Naive thymus-derived CD4-positive, alpha-beta T cell (primary cell): ENCODE measurements at regions of chr13 and their contacts with region 1.

Region 1: GRCh38 chr13:48492470-48493065 is 40.3 kb downstream of the RCBTB2 start:
- DNase-seq: peak; percentile 38 to 79 (median 74)
- ATAC-seq: peak; percentile 91
- H3K4me3 ChIP-seq: peak overlapping the region; percentile 73
- H3K4me3 Mint-ChIP-seq: no peak overlapping the region
- H3K27ac ChIP-seq: peak overlapping the region; percentile 74
- H3K27ac Mint-ChIP-seq: no peak overlapping the region
- H3K4me1 ChIP-seq: peaks cover 67% of the 10 kb centered on the region in 2 donors
- H3K4me1 Mint-ChIP-seq: peaks cover 1 to 55% (median 34%) of the 10 kb centered on the region in 7 donors
- H3K27me3 ChIP-seq: no peaks in the 10 kb centered on the region
- H3K27me3 Mint-ChIP-seq: no peaks in the 10 kb centered on the region

Region 2: GRCh38 chr13:47420568-47420967 is 1072.0 kb before region 1 on chr13:
- CTCF ChIA-PET with region 1: no interaction called
- POLR2A ChIA-PET with region 1: no interaction called
- intact Hi-C with region 1: no loop called
- DNase-seq: no peak
- ATAC-seq: no peak
- H3K4me3 ChIP-seq: no peak overlapping the region
- H3K4me3 Mint-ChIP-seq: no peak overlapping the region
- H3K27ac ChIP-seq: no peak overlapping the region
- H3K27ac Mint-ChIP-seq: no peak overlapping the region
- H3K4me1 ChIP-seq: no peaks in the 10 kb centered on the region
- H3K4me1 Mint-ChIP-seq: no peaks in the 10 kb centered on the region
- H3K27me3 ChIP-seq: no peaks in the 10 kb centered on the region
- H3K27me3 Mint-ChIP-seq: peaks cover 0 to 9% (median 0%) of the 10 kb centered on the region in 5 donors

Region 3: DNA sequence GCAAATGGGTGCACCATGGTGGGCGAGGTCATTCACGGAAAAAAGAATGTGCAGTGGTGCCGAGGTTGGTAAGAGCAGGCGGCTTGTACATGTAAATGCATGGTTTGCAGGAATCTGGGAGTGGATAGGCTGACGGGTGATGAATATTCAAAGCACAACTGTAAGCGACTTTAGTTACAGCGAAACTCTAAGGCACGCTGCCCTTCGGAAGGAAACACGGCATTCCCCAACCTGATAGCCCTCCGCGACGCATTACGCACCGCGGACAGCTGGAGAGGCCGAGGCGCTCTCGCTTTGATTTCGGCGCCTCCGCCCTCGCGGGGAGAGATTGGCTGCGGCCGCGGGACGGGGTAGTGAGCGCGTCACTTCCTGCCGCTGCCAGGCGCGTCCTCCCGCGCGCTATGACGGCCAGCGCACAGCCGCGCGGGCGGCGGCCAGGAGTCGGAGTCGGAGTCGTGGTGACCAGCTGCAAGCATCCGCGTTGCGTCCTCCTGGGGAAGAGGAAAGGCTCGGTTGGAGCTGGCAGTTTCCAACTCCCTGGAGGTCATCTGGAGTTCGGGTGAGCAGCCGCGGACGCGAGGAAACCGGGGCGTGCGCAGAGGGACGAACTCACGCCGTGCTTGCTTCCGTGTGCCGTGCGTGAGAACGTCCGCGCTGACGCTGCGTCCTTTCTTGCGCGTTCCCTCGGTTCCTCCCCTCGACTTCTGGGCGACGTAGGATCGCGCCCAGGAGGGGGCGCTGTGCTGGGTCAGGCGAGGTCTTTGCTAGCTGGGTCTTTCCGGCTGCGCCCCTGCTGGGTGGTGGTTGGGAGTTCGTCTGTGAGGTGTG is 455.0 kb before region 1 on chr13 and contains the start of gene NUDT15:
- CTCF ChIA-PET with region 1: interaction called, 3 read pairs
- POLR2A ChIA-PET with region 1: interaction called, 7 read pairs
- intact Hi-C with region 1: loop called in 1 of 2 experiments (anchors 10 kb)
- DNase-seq: peak; percentile 93 to 98 (median 97)
- ATAC-seq: peak; percentile 96
- H3K4me3 ChIP-seq: peak within 1 kb of the TSS; percentile 90
- H3K4me3 Mint-ChIP-seq: peak within 1 kb of the TSS; percentile 82 to 98 (median 95)
- H3K27ac ChIP-seq: peak within 1 kb of the TSS; percentile 91
- H3K27ac Mint-ChIP-seq: peak within 1 kb of the TSS; percentile 96 to 100 (median 97)
- H3K4me1 ChIP-seq: peaks cover 14 to 15% of the 10 kb centered on the region in 2 donors
- H3K4me1 Mint-ChIP-seq: peaks cover 15 to 52% (median 40%) of the 10 kb centered on the region in 7 donors
- H3K27me3 ChIP-seq: no peaks in the 10 kb centered on the region
- H3K27me3 Mint-ChIP-seq: no peaks in the 10 kb centered on the region
- total RNA-seq, gene NUDT15: 4.3 to 13.6 (median 8.7) TPM

Region 4: GRCh38 chr13:48370815-48371214 is 121.8 kb before region 1 on chr13:
- CTCF ChIA-PET with region 1: no interaction called
- POLR2A ChIA-PET with region 1: no interaction called
- intact Hi-C with region 1: no loop called
- DNase-seq: no peak
- ATAC-seq: no peak
- H3K4me3 ChIP-seq: no peak overlapping the region
- H3K4me3 Mint-ChIP-seq: no peak overlapping the region
- H3K27ac ChIP-seq: no peak overlapping the region
- H3K27ac Mint-ChIP-seq: no peak overlapping the region
- H3K4me1 ChIP-seq: no peaks in the 10 kb centered on the region
- H3K4me1 Mint-ChIP-seq: peaks cover 0 to 5% (median 0%) of the 10 kb centered on the region in 7 donors
- H3K27me3 ChIP-seq: no peaks in the 10 kb centered on the region
- H3K27me3 Mint-ChIP-seq: no peaks in the 10 kb centered on the region

Region 5: DNA sequence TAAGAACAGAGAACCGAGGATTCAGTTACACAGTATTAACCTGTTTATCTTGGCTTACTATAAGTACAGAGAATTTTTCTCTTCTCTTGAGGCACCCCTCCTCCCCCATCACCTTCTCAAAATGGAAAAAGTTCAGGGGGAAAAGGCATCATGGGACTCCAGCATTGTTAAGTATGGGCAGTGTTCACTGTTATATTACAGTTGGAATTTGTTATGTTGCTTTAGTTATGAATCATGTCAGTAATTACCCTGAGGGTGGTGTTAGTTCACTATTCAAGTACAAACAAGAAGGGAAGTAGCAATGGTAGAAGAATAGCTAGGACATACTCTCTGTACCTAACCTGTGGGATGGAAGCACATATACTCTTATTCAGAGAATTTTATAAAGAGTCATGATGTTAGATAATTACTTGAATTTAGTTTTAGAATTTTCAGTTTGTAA is 91.7 kb before region 1 on chr13:
- CTCF ChIA-PET with region 1: interaction called, 4 read pairs
- POLR2A ChIA-PET with region 1: interaction called, 10 read pairs
- intact Hi-C with region 1: no loop called
- DNase-seq: peak in 2 of 9 donors; percentile 36 to 42
- ATAC-seq: peak; percentile 74
- H3K4me3 ChIP-seq: no peak overlapping the region
- H3K4me3 Mint-ChIP-seq: peak overlapping the region; percentile 1 to 83 (median 54)
- H3K27ac ChIP-seq: peak overlapping the region; percentile 49
- H3K27ac Mint-ChIP-seq: peak overlapping the region; percentile 1 to 90 (median 50)
- H3K4me1 ChIP-seq: peaks cover 33 to 40% of the 10 kb centered on the region in 2 donors
- H3K4me1 Mint-ChIP-seq: peaks cover 23 to 78% (median 63%) of the 10 kb centered on the region in 7 donors
- H3K27me3 ChIP-seq: no peaks in the 10 kb centered on the region
- H3K27me3 Mint-ChIP-seq: no peaks in the 10 kb centered on the region